CD4-positive, alpha-beta T cell (primary cell): ENCODE measurements at regions of chr16 and their contacts with region 1.

Region 1: DNA sequence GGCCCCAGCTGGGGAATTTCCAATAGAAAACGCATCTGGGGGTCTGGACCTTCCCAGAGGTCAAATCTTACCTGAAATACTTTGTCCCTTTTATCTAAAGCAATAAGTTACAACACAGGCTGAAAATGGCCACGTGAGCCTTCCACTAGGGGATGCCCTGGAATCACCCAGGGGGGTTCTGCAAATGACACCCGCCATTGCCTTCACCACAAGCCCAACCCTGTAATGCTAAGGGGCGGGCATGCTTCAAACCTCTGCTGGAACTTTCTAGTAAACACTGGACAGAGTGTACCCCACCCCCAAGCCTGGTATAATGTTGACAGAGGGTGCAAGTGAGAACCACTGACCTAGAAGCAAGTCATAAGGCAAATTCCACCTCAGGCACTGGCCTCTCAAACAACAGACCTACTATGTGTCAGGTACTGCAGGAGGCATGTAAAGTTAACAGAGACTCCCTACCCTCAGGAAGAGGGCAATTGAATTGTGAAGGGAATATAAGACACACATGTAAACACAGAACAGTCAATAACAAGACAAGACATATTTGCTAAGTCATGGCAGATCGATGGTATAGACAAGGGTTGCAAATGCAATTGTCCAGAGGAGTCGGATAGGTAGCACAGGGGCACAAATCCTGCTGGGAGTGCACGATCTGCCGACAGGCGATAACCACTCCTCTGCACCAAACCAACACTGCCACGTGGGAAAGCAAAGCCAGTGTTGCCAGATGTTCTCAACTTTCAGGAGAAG is 59.0 kb downstream of the ARHGAP17 start:
- DNase-seq: no peak
- ATAC-seq: no peak
- H3K4me3 ChIP-seq: no peak overlapping the region
- H3K4me3 Mint-ChIP-seq: no peak overlapping the region
- H3K27ac ChIP-seq: no peak overlapping the region
- H3K27ac Mint-ChIP-seq: no peak overlapping the region
- H3K4me1 ChIP-seq: no peaks in the 10 kb centered on the region
- H3K4me1 Mint-ChIP-seq: no peaks in the 10 kb centered on the region
- H3K27me3 ChIP-seq: no peaks in the 10 kb centered on the region
- H3K27me3 Mint-ChIP-seq: no peaks in the 10 kb centered on the region
- CTCF ChIP-seq: no peak

Region 2: DNA sequence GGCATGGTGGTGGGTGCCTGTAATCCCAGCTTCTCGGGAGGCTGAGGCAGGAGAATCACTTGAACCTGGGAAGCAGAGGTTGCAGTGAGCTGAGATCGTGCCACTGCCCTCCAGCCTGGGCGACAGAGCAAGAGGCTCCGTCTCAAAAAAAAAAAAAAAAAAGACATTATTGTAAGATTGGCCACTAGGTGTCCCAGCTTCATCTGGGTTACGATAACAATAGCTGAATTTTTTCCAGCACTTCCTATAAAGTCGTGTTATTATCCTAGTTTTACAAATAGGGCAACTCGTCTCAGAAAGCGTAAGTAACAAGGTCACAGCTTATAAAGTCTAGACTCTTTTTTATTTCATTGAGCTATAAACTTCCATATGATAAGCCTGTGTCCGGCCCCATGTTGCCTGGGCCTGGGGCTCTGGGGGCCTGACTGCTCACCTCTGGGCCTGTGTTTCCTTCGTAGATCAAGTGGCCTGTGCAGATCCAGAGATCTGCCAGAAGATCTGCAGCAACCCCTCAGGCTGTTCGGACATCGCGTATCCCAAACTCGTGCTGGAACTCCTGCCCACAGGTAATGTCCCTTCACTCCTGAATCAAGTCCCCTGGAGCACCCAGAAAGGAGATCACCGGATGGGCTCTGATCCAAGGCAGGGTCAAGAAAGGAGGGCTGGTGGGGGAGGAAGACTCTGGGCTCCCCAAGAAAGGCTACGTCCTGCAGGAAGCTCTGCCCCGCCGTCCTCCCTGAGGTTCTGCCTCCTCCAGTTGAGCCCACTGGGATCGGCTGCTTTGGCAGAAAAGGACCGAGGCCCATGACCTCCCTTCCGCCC is 49.7 kb before region 1 on chr16:
- CTCF ChIA-PET with region 1: no interaction called
- POLR2A ChIA-PET with region 1: no interaction called
- intact Hi-C with region 1: no loop called
- DNase-seq: no peak
- ATAC-seq: no peak
- H3K4me3 ChIP-seq: no peak overlapping the region
- H3K4me3 Mint-ChIP-seq: no peak overlapping the region
- H3K27ac ChIP-seq: no peak overlapping the region
- H3K27ac Mint-ChIP-seq: no peak overlapping the region
- H3K4me1 ChIP-seq: no peaks in the 10 kb centered on the region
- H3K4me1 Mint-ChIP-seq: no peaks in the 10 kb centered on the region
- H3K27me3 ChIP-seq: no peaks in the 10 kb centered on the region
- H3K27me3 Mint-ChIP-seq: peaks cover 5% of the 10 kb centered on the region
- CTCF ChIP-seq: peak; percentile 32

Region 3: DNA sequence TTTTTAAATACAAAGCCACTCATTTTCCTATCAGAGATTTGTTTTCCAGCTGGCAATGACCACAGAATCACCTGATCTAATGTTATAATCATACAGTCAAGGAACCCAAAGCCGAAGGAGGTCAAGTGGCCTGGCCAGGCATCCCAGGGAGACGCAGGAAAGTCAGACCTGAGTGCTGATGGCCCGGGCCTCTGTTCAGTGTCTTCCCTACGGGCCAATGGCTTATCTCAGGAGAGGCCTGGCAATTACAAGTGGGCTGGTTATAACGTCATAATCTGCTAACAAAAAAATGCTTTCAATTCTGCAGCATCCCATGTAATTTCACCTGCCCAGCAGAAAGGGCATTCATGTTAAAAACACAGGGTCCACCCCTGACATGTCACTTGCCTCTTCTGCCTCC is 15.6 kb after region 1 on chr16:
- CTCF ChIA-PET with region 1: no interaction called
- POLR2A ChIA-PET with region 1: no interaction called
- intact Hi-C with region 1: loop called in 1 of 2 experiments (anchors 2 kb)
- DNase-seq: no peak
- ATAC-seq: no peak
- H3K4me3 ChIP-seq: no peak overlapping the region
- H3K4me3 Mint-ChIP-seq: no peak overlapping the region
- H3K27ac ChIP-seq: no peak overlapping the region
- H3K27ac Mint-ChIP-seq: no peak overlapping the region
- H3K4me1 ChIP-seq: peaks cover 22% of the 10 kb centered on the region
- H3K4me1 Mint-ChIP-seq: peaks cover 40% of the 10 kb centered on the region
- H3K27me3 ChIP-seq: no peaks in the 10 kb centered on the region
- H3K27me3 Mint-ChIP-seq: no peaks in the 10 kb centered on the region
- CTCF ChIP-seq: no peak